ENCODE measurements at regions of chr19 and their contacts with region 1.

Region 1: GRCh38 chr19:53195265-53195903 is 2.2 kb upstream of the ZNF665 start:
- DNase-seq: peak; percentile 83
- ATAC-seq: peak; percentile 50
- H3K4me3 Mint-ChIP-seq: peak overlapping the region; percentile 22
- H3K27ac Mint-ChIP-seq: peak overlapping the region; percentile 8
- H3K4me1 Mint-ChIP-seq: peaks cover 33% of the 10 kb centered on the region
- H3K27me3 Mint-ChIP-seq: no peaks in the 10 kb centered on the region

Region 2: GRCh38 chr19:52942386-52943133 is 252.8 kb before region 1 on chr19:
- CTCF ChIA-PET with region 1: interaction called, 3 read pairs
- POLR2A ChIA-PET with region 1: no interaction called
- intact Hi-C with region 1: loop called in 1 of 2 experiments (anchors 1 kb)
- DNase-seq: peak; percentile 97
- ATAC-seq: peak; percentile 99
- H3K4me3 Mint-ChIP-seq: peak overlapping the region; percentile 90
- H3K27ac Mint-ChIP-seq: peak overlapping the region; percentile 91
- H3K4me1 Mint-ChIP-seq: peaks cover 18% of the 10 kb centered on the region
- H3K27me3 Mint-ChIP-seq: no peaks in the 10 kb centered on the region

Region 3: DNA sequence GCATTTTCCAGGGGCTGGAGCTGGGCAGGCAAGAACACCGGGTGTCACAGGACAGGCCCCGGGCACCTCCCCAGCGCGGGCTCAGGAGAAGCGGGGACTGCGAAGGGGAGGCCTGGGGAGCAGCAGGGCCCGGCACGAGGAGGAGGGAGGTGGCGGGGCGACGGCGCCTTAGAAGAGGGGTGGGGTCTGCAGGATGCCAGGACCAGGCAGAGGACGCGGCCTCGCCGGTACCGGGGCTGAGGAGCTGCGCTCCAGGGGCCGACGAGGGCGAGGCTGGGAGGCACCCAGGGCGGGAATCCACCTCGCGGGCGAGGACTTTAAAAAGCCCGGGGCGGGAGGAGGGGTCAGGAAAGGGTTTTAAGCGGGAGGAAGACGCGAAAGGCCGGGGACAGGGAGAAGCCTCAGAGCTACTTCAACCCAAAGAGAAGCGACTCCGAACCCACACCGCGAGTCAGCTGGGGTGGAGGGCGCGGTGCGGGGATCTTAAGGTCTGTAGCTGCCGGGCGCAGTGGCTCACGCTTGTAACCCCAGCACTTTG is 37.2 kb before region 1 on chr19:
- CTCF ChIA-PET with region 1: no interaction called
- POLR2A ChIA-PET with region 1: no interaction called
- intact Hi-C with region 1: loop called in 1 of 2 experiments (anchors 1 kb)
- DNase-seq: peak; percentile 64
- ATAC-seq: peak; percentile 36
- H3K4me3 Mint-ChIP-seq: peak overlapping the region; percentile 72
- H3K27ac Mint-ChIP-seq: peak overlapping the region; percentile 74
- H3K4me1 Mint-ChIP-seq: peaks cover 14% of the 10 kb centered on the region
- H3K27me3 Mint-ChIP-seq: no peaks in the 10 kb centered on the region

Region 4: DNA sequence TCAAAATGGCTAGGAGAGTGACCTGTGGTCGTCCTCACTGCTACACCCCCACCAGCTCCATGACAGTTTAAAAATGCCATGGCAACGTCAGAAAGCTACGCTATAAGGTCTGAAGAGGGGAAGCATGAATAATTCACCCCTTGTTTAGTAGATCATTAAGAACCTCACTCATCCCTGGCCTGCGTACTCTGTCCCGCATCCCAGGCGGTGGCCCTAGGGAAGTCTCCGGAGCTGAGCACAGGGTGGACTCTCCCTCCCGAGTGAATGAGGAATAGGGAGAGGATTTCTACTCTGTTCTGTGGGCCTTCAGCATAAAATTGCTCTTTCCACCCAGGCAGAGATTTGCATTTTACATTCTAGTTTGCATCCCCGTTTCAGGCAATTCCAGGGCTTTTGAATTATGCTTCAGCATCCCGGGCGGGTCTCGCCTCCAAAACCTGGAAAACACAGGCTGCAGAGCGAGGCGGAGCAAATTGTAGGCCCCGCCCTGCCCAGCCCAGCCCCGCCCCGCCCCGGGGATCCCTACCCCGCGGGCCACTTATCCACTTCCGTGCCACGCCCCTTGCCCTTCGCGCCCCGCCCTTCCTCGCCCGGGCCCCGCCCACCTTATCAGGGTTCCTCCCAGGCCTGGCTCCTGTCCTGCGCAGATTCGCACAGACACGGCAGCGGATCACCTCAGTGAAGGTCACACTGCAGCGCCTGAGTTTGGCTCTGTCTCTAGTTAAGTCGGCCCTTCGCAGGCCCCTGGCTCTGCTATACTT is 162.6 kb after region 1 on chr19:
- CTCF ChIA-PET with region 1: interaction called, 4 read pairs
- POLR2A ChIA-PET with region 1: no interaction called
- intact Hi-C with region 1: loop called in 1 of 2 experiments (anchors 1 kb)
- DNase-seq: peak; percentile 10
- ATAC-seq: no peak
- H3K4me3 Mint-ChIP-seq: no peak overlapping the region
- H3K27ac Mint-ChIP-seq: no peak overlapping the region
- H3K4me1 Mint-ChIP-seq: no peaks in the 10 kb centered on the region
- H3K27me3 Mint-ChIP-seq: no peaks in the 10 kb centered on the region

Region 5: DNA sequence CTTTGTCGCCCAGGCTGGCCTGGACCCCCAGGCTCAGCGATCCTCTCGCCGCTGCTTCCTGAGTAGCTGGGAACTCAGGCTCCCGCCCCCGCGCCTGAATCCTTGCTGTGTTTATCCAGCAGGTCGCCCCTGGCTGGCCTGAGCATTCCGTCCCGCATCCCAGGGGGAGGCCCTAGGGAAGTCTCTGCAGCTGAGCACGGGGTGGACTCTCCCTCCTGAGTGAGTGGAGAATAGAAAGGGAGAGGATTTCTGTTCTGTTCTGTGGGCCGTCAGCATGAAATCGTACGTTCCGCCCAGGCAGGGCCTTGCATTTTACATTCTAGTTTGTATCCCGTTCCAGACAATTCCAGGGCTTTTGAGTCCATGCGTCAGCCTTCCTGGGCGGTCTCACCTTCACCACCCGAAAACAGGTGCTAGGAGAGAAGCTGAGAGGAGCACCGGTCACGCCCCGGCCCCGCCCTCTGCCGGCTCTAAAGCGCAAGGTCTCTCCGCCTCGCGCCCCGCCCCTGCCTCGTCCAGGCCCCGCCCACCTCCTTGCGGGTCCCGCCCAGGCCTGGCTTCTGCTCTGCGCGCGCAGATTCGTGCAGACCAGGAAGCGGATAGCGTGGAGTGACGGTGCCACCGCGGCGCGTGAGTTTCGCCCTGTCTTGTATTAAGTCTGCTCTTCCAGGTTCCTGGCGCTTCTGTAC is 236.2 kb after region 1 on chr19 and contains the start of gene ZNF761:
- CTCF ChIA-PET with region 1: no interaction called
- POLR2A ChIA-PET with region 1: no interaction called
- intact Hi-C with region 1: loop called in 1 of 2 experiments (anchors 1 kb)
- DNase-seq: peak; percentile 98
- ATAC-seq: peak; percentile 99
- H3K4me3 Mint-ChIP-seq: peak within 1 kb of the TSS; percentile 94
- H3K27ac Mint-ChIP-seq: peak within 1 kb of the TSS; percentile 83
- H3K4me1 Mint-ChIP-seq: peaks cover 26% of the 10 kb centered on the region
- H3K27me3 Mint-ChIP-seq: no peaks in the 10 kb centered on the region
- total RNA-seq, gene ZNF761: 10.5 to 11.4 TPM

Region 6: DNA sequence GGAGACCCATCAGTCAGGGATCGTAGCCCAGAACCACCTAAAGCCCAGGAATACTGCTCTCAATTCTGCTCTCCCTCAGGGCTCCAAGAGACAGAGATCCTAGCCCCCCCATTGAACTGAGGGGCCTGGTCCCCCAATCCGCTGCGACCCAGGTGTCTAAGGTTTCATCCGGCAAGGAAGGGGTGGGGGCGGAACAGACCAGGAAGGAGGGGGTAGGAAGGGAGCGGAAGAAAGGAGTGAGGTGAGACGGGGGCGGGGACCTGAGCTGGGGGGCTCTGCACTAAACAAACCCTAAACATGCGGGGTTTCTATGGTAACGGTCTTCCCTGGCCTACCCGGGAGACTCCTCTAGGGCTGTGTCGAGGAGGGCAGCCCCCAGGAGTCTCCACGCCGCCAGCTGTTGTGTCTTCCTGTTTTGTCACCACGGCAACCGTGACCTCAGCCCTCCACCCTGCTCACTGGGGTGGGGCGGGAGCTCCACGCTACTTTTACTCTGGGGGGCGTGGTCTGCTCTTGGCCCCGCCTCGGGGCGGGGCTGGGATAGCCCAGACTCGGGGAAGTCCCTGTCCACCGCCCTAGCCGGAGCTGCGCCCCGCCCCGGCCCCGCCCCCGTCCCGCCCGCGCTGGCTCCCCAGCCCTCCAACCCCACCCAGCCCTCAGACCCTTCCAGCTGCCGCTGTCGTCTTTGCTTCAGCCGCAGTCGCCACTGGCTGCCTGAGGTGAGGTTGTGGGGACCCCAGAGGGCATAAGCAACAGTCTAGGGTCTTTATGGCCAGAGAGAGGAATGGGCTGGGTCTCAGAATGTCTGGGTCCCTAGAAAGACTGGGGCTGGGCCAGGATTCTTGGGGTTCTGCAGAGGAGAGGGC is 672.1 kb after region 1 on chr19 and contains the start of gene MYADM:
- CTCF ChIA-PET with region 1: no interaction called
- POLR2A ChIA-PET with region 1: no interaction called
- intact Hi-C with region 1: loop called in 1 of 2 experiments (anchors 5 kb)
- DNase-seq: peak; percentile 99
- ATAC-seq: peak; percentile 71
- H3K4me3 Mint-ChIP-seq: peak within 1 kb of the TSS; percentile 91
- H3K27ac Mint-ChIP-seq: peak within 1 kb of the TSS; percentile 88
- H3K4me1 Mint-ChIP-seq: peaks cover 32% of the 10 kb centered on the region
- H3K27me3 Mint-ChIP-seq: no peaks in the 10 kb centered on the region
- total RNA-seq, gene MYADM: 46.4 to 54.6 TPM